Left cardiac atrium (tissue), 4 donors: ENCODE measurements at regions of chr9 and their contacts with region 1.

Region 1: GRCh38 chr9:35882263-35882848 is 12.2 kb upstream of the OR13J1 start:
- DNase-seq: peak; percentile 88
- ATAC-seq: peak; percentile 87 to 89

Region 2: GRCh38 chr9:35646533-35647265 is 235.7 kb before region 1 on chr9:
- intact Hi-C with region 1: loop called in 1 of 2 experiments (anchors 5 kb)
- DNase-seq: peak; percentile 95
- ATAC-seq: peak; percentile 95 to 96

Region 3: DNA sequence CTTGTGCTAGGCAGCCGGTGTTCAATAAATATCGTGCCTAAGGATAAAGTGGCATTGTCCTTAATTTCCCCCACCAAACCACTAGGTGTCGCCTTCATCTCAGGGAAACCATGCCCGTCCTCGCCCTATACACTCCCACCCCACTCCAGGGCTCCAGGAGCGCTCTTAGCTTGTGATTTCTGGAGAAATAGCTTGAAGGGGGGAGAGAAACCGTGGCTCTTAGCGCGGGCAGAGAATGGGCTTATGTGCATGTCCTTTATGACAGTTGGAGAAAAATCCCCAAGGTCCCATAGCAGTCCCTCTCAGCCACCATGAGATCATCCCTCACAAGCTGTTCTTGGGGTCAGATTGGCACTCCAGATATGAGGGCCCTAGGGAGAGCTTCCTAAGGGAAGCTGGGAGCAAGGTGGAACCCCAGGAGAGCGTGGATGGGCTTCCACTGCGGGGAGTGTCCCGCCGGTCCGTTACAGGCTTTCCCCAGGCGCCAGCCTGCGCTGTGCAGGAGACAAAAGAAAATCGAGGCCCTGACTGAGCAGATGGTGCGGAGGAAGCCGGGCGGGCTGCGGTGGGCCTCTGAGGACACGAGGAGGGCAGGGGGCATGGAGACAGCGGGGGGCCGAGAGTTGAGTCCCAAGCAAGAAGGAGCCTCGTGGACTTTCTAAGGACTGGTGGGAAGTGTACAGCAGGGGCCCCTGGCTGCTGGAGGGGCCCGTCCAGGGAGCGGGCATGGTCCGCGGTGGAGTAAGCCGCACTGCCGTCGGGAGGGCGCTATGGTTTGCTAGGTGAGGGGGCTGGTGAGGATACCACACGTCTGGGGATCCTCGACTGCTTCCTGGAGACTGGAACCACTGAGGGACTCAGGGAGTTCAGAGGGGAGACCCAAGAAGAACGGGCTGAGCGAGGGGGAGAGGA is 91.7 kb before region 1 on chr9:
- intact Hi-C with region 1: loop called (anchors 1 to 10 kb)
- DNase-seq: peak; percentile 76
- ATAC-seq: peak; percentile 88 to 91